A673 (cell line): ENCODE measurements at regions of chr7 and their contacts with region 1.

Region 1: DNA sequence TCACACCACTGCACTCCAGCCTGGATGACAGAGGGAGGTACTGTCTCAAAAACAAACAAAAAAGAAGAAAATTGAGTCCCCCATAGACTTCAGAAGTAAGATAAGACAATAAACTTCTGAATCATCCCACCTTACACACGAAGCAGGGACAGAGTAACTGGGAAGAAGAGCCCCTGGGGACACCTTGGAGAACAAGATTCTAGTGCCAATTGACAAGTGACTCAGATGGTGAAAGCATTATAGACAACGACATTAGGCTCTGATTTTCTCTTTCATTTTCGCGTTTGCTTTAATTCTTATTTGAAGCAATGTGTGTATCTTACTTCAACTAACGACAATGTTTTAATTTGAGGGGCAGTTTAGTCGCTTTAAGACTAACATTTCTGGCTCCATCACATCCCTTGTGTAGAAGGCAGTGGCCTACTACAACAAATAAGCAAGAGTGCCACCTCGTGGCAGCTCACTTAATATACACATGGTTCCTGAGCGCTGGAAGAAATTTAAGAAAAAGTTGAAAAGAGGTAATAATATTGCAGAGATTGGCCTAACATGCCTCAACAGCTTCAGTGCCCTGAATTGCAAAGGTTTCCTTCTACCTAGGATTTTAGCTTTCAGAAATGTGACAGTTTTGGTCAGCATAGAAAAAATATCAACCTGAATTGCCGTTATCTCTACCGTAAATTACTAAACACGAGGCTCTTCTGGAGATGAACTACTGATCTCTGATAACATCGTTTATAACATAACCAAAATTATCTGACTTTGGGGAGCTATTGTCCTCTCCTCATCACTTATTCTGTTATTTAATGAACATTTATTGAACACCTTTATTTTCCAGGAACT is 36.7 kb downstream of the ASNS start:
- DNase-seq: peak; percentile 74
- H3K4me3 ChIP-seq: no peak overlapping the region
- H3K27ac ChIP-seq: no peak overlapping the region
- H3K4me1 ChIP-seq: no peaks in the 10 kb centered on the region
- H3K27me3 ChIP-seq: peaks cover 18% of the 10 kb centered on the region
- CTCF ChIP-seq: peak; percentile 80

Region 2: DNA sequence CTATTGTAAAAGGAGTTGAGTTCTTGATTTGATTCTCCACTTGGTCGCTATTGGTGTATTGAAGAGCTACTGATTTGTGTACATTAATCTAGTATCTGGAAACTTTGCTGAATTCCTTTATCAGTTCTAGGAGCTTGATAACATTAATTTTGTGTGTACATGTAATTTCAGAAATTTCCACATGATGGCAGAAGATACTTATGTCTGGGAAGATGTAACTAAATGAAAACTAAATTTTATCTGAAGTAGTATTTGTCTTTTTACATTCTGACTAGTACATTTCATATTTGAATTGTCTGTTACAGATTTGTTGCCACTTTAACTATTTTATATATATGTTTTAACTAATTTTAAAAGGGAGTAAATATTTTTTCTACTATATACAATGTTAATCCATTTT is 690.4 kb before region 1 on chr7:
- CTCF ChIA-PET with region 1: no interaction called
- POLR2A ChIA-PET with region 1: no interaction called
- intact Hi-C with region 1: loop called (anchors 5 kb)
- DNase-seq: peak; percentile 46
- H3K4me3 ChIP-seq: no peak overlapping the region
- H3K27ac ChIP-seq: no peak overlapping the region
- H3K4me1 ChIP-seq: no peaks in the 10 kb centered on the region
- H3K27me3 ChIP-seq: no peaks in the 10 kb centered on the region
- CTCF ChIP-seq: peak; percentile 59

Region 3: DNA sequence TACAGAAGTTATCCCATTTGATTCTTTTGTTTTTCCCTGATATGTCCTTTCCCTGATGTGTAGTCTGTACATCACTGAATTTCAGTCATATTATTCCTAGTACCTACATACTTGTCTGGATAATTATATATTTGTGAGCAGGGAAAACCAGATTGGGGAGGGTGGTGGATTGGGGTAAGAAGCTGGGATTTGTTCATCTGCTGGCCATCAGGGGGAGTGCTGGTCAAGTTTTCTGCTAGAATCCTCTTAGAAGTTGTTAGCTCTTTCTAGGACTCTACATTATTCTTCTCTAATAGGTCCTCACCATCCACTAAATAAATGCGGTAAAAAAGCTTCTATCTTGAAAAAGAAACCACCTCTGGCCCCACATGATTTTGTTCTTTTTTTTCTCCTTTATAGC is 336.3 kb before region 1 on chr7:
- CTCF ChIA-PET with region 1: interaction called, 4 read pairs
- POLR2A ChIA-PET with region 1: no interaction called
- intact Hi-C with region 1: loop called (anchors 2 kb)
- DNase-seq: peak; percentile 42
- H3K4me3 ChIP-seq: no peak overlapping the region
- H3K27ac ChIP-seq: no peak overlapping the region
- H3K4me1 ChIP-seq: no peaks in the 10 kb centered on the region
- H3K27me3 ChIP-seq: no peaks in the 10 kb centered on the region
- CTCF ChIP-seq: peak; percentile 62

Region 4: GRCh38 chr7:98266840-98267239 is 431.3 kb after region 1 on chr7:
- CTCF ChIA-PET with region 1: no interaction called
- POLR2A ChIA-PET with region 1: no interaction called
- intact Hi-C with region 1: no loop called
- DNase-seq: no peak
- H3K4me3 ChIP-seq: no peak overlapping the region
- H3K27ac ChIP-seq: no peak overlapping the region
- H3K4me1 ChIP-seq: no peaks in the 10 kb centered on the region
- H3K27me3 ChIP-seq: no peaks in the 10 kb centered on the region
- CTCF ChIP-seq: peak; percentile 41; the same call in 1 of the 2 replicates